Panc1 (cell line): ENCODE measurements at regions of chr17 and their contacts with region 1.

Region 1: DNA sequence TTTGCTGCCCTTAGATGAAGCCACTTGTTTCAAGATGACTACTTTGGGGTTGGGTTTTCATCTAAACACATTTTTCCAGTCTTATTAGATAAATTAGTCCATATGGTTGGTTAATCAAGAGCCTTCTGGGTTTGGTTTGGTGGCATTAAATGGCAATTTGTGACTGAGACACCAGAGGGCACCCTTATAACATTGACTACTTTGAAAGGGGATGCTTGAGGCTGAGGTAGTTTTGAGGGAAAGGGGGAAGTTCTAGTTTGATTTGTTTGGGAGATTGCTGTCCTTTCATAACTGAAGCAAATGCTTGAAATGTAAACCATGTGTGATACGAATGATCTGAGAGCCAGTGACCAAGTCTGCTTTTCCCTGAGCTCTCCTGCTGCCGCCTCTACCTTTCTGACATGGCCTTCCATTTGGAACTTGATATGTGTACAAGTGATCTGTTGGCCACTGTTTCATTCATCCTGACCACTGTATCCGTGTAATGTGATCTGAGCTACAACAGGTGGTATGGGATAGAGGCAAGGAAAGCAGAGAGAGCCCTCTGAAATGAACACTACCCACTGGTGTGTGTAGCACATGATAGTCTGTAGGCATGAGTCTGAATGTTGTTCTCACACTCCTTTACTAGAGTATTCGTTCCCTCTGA is 5.8 kb upstream of the RARA start:
- DNase-seq: peak; percentile 56
- ATAC-seq: no peak
- H3K4me3 ChIP-seq: no peak overlapping the region
- H3K27ac ChIP-seq: peak overlapping the region; percentile 72
- H3K4me1 ChIP-seq: peaks cover 46% of the 10 kb centered on the region
- H3K27me3 ChIP-seq: no peaks in the 10 kb centered on the region
- CTCF ChIP-seq: peak; percentile 80

Region 2: DNA sequence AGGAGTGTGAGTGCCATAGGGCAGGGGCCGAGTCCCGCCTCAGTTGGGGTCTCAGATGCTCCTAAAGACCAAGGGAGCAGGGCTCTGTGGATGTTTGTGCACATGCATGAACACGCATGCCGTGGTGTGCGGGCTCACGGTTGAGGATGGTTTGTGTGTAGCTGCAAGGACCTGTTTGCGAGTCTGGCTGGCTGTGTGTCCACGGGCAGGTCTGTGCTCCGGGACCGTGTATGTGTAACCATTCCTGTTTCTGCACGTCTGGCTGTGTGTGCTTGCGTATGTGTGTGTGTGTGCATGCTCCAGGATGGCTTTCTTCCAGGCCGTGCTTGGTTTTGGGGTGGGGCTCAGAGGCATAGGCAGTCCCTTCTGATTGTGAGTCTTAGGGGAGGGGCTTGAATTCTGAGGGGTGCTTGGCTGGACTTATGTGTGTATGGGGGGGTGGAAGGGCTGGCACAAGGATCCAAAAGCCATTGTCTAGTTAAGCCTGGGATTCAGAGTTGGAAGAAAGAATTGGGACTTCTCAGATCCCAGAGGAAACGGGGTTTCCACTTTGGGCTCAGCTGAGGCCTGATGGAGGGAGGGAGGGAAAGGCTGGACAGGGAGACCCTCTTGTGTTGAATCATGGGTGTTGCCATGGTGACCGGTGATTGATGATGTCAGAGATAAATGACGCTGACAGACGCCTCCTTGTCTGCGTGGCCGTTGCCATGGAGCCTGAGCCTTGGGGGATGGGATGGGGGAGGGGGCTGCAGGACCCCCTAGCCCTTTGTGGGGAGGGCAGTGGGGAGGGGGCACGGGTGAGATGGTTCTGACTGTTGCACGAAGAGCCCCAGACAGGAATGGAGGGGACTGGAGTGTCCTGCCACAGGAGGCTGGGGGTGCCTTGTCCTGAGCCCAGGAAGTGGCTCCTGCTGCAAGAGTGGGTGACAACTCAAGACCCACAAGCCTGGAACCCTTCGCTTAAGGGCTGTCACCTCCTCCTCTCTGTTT is 47.1 kb after region 1 on chr17:
- CTCF ChIA-PET with region 1: interaction called, 81 read pairs
- POLR2A ChIA-PET with region 1: interaction called, 4 read pairs
- in situ Hi-C with region 1: loop called (anchors 5 kb)
- intact Hi-C with region 1: loop called (anchors 1 kb)
- DNase-seq: no peak
- ATAC-seq: no peak
- H3K4me3 ChIP-seq: no peak overlapping the region
- H3K27ac ChIP-seq: no peak overlapping the region
- H3K4me1 ChIP-seq: peaks cover 77% of the 10 kb centered on the region
- H3K27me3 ChIP-seq: no peaks in the 10 kb centered on the region
- CTCF ChIP-seq: no peak

Region 3: GRCh38 chr17:40355123-40355803 is 52.1 kb after region 1 on chr17:
- CTCF ChIA-PET with region 1: interaction called, 81 read pairs
- POLR2A ChIA-PET with region 1: no interaction called
- in situ Hi-C with region 1: loop called (anchors 5 kb)
- intact Hi-C with region 1: loop called (anchors 1 kb)
- DNase-seq: no peak
- ATAC-seq: peak; percentile 82
- H3K4me3 ChIP-seq: no peak overlapping the region
- H3K27ac ChIP-seq: no peak overlapping the region
- H3K4me1 ChIP-seq: peaks cover 39% of the 10 kb centered on the region
- H3K27me3 ChIP-seq: no peaks in the 10 kb centered on the region
- CTCF ChIP-seq: peak; percentile 97

Region 4: DNA sequence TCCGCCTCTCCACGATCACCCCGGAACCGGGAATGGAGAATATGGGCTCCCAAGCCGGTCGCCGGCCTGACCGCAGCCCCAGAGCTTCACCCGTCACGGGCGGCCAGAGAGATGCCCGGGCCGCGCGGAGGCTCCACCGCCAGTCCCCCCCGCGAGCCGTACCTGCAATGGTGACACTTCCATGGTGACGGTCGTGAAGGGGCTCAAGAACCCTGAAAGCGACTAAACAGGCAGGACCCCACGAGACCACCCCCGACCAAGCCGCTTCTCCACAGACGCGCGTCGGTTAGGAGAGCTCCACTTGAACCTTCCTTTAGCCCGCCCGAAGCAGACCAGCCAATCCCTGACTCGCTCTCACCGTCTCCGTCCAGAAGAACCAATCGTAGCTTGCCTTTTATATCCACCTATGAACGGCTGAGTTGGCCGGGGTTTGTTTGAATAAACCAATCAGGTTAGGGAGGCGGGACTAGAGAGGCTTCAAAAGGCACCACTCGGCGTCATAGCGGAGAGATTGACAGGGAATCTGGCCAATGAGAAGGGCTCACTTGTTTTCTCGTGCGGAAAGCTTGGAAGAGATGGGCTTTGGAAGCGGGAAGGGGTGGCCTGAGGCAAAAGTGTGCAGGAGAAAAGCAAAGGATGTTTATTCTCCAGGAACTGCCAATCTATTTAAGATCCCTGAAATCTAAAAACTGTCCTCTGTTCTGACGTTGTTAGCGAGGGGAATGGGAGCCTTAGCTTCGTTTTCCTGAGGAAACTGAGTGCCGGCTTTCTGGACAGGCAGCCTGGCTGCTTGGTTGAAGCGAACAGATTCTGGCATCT is 114.7 kb after region 1 on chr17 and contains the start of gene TOP2A:
- CTCF ChIA-PET with region 1: no interaction called
- POLR2A ChIA-PET with region 1: interaction called, 3 read pairs
- in situ Hi-C with region 1: no loop called
- intact Hi-C with region 1: loop called (anchors 10 kb)
- DNase-seq: peak; percentile 99
- ATAC-seq: peak; percentile 97
- H3K4me3 ChIP-seq: peak within 1 kb of the TSS; percentile 83 to 86
- H3K27ac ChIP-seq: peak within 1 kb of the TSS; percentile 95
- H3K4me1 ChIP-seq: peaks cover 18% of the 10 kb centered on the region
- H3K27me3 ChIP-seq: no peaks in the 10 kb centered on the region
- CTCF ChIP-seq: no peak
- total RNA-seq, gene TOP2A: 230 TPM

Region 5: DNA sequence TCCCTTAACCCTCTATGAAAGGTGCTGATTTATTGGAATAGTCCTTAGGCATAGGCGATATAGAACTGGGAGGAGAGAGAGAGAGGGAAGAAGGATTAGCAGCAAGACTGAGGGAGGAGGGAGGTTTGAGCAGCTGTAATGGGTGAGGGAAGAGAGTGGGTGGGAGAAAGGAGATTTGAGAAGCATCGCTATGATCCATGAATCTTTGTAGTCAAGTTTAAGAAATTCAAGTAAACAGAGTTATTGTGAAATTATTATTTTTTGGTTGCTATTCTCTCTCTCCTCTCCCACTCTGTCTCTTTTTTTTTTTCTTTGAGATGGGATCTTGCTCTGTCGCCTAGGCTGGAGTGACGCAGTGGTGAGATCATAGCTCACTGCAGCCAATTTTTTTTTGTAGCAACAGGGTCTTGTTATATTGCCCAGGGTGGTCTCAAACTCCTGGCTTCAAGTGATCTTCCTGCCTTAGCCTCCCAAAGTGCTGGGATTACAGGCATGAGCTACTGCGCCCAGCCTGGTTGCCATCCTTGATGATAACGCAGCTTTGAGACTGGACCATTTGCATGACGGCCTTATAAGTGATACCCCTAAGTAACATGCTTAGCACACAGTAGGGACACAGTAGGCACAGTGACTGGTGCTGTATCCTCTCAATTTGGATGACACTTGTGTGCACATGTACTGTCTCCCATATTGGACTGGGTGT is 219.3 kb after region 1 on chr17:
- CTCF ChIA-PET with region 1: no interaction called
- POLR2A ChIA-PET with region 1: no interaction called
- in situ Hi-C with region 1: loop called (anchors 5 kb)
- intact Hi-C with region 1: no loop called
- DNase-seq: no peak
- ATAC-seq: no peak
- H3K4me3 ChIP-seq: no peak overlapping the region
- H3K27ac ChIP-seq: no peak overlapping the region
- H3K4me1 ChIP-seq: peaks cover 5% of the 10 kb centered on the region; the same call in 1 of the 2 replicates
- H3K27me3 ChIP-seq: peaks cover 8% of the 10 kb centered on the region
- CTCF ChIP-seq: no peak

Region 6: GRCh38 chr17:40538019-40538935 is 235.1 kb after region 1 on chr17:
- CTCF ChIA-PET with region 1: interaction called, 12 read pairs
- POLR2A ChIA-PET with region 1: interaction called, 3 read pairs
- in situ Hi-C with region 1: no loop called
- intact Hi-C with region 1: no loop called
- DNase-seq: no peak
- ATAC-seq: no peak
- H3K4me3 ChIP-seq: no peak overlapping the region
- H3K27ac ChIP-seq: no peak overlapping the region
- H3K4me1 ChIP-seq: no peaks in the 10 kb centered on the region
- H3K27me3 ChIP-seq: no peaks in the 10 kb centered on the region
- CTCF ChIP-seq: no peak